ENCODE measurements at regions of chr9 and their contacts with region 1.

Region 1: GRCh38 chr9:71249729-71250317 is 128.4 kb upstream of the TRPM3 start:
- DNase-seq: peak; percentile 75
- H3K4me3 Mint-ChIP-seq: no peak overlapping the region
- H3K27ac Mint-ChIP-seq: no peak overlapping the region
- H3K4me1 Mint-ChIP-seq: peaks cover 5% of the 10 kb centered on the region
- H3K27me3 Mint-ChIP-seq: peaks cover 33% of the 10 kb centered on the region
- CTCF ChIP-seq: peak; percentile 87

Region 2: GRCh38 chr9:70634696-70635095 is 615.1 kb before region 1 on chr9:
- CTCF ChIA-PET with region 1: interaction called, 214 read pairs
- POLR2A ChIA-PET with region 1: no interaction called
- intact Hi-C with region 1: no loop called
- DNase-seq: no peak
- H3K4me3 Mint-ChIP-seq: no peak overlapping the region
- H3K27ac Mint-ChIP-seq: no peak overlapping the region
- H3K4me1 Mint-ChIP-seq: no peaks in the 10 kb centered on the region
- H3K27me3 Mint-ChIP-seq: peaks cover 11% of the 10 kb centered on the region
- CTCF ChIP-seq: no peak

Region 3: DNA sequence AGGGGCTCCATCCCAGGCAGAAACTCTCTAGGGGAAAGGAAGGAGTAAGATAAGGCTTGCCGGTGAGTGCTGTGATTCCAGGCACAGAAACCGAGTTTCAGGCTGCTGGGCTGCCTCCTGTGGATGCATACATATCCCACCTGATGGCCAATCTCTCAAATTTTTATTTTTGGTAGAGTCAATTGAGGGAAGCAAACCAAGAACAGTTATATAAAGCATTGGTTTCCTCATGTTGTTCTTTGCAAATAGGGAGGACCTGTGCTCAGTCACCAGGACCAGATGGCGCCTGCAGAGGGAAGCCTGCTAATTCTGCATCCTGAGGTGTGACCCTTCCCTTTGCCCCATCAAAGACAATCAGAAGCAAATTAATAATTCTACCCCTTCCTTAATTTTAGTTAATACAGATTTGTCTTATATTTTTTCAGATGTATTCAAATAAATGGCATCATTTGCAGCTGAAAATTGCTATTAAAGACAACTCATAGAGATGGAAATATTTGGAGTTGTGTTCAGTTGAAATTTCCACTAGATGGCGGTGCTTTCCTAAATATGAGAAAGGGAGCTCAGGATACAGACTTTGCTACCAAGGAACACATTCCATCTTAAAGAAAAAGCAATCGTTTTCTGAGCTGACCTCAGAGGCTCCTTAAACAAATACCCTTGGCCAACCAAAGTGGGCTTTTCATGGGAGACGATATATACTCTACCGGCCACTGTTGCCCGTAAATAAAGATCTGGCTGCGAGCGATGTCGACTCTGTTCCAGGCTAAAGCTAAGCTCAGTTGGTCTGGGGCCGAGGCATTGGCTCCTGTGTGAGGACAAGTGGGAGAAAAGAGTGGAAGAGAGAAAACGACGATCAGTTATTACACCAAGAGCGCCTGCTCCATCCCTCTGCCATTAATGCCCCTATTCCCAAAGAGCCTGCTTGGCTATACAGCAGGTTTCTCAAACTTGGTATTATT is 609.7 kb before region 1 on chr9:
- CTCF ChIA-PET with region 1: interaction called, 214 read pairs
- POLR2A ChIA-PET with region 1: interaction called, 4 read pairs
- intact Hi-C with region 1: loop called (anchors 1 kb)
- DNase-seq: peak; percentile 64
- H3K4me3 Mint-ChIP-seq: no peak overlapping the region
- H3K27ac Mint-ChIP-seq: no peak overlapping the region
- H3K4me1 Mint-ChIP-seq: no peaks in the 10 kb centered on the region
- H3K27me3 Mint-ChIP-seq: peaks cover 18% of the 10 kb centered on the region
- CTCF ChIP-seq: peak; percentile 66

Region 4: DNA sequence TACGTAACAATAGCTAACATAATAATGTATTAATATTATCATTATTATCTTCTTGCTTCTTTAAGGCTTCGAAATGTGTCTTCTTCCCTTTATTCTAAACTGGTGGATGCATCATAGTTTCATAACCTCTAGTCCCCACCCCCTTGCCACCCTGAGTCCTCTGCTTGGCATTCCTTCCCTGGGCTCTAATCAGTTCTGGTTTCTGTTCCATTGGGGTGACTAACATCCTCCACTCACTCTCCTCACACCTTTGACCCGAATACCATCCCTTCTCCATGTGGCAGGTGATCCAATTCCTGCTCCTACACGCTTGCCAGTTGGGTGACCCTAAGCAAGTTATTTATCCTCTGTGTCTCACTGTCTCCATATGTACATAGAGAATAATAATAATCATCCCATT is 414.5 kb before region 1 on chr9:
- CTCF ChIA-PET with region 1: no interaction called
- POLR2A ChIA-PET with region 1: no interaction called
- intact Hi-C with region 1: loop called (anchors 10 kb)
- DNase-seq: peak; percentile 8
- H3K4me3 Mint-ChIP-seq: no peak overlapping the region
- H3K27ac Mint-ChIP-seq: no peak overlapping the region
- H3K4me1 Mint-ChIP-seq: no peaks in the 10 kb centered on the region
- H3K27me3 Mint-ChIP-seq: peaks cover 5% of the 10 kb centered on the region
- CTCF ChIP-seq: no peak

Region 5: DNA sequence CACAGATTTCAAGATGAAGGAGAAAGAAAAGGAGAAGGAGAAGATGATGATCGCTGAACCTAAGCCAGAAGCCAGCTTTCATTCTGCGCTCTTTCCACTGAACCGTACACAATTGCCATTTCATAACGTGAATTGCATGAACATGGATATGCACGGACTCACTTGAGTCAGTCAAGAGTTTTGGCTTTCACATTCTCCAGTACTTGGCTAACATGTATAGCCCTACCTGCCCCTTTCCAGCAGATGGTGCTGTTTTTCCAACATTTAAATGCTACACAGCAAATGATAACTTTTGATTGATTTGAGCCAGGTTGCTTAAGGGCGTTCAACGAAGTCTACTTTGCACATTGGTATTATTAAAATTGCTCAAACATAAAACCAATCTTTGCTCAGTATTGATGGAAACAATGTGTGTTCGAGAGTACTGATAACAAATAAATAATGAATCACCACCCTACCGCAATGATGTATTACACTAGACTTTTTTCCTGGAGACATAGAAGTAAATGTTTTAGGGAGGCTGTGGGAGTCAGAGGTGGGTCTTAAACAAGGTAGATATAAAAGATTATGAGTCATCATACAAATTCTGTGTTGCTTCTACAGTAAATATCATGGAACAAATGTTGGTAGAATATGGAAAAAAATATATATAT is 324.8 kb before region 1 on chr9:
- CTCF ChIA-PET with region 1: interaction called, 26 read pairs
- POLR2A ChIA-PET with region 1: interaction called, 4 read pairs
- intact Hi-C with region 1: loop called (anchors 1 kb)
- DNase-seq: peak; percentile 88
- H3K4me3 Mint-ChIP-seq: peak overlapping the region; percentile 66
- H3K27ac Mint-ChIP-seq: peak overlapping the region; percentile 19
- H3K4me1 Mint-ChIP-seq: peaks cover 25% of the 10 kb centered on the region
- H3K27me3 Mint-ChIP-seq: no peaks in the 10 kb centered on the region
- CTCF ChIP-seq: peak; percentile 82

Region 6: GRCh38 chr9:71001780-71002386 is 247.9 kb before region 1 on chr9:
- CTCF ChIA-PET with region 1: interaction called, 6 read pairs
- POLR2A ChIA-PET with region 1: no interaction called
- intact Hi-C with region 1: loop called (anchors 1 kb)
- DNase-seq: peak; percentile 70
- H3K4me3 Mint-ChIP-seq: no peak overlapping the region
- H3K27ac Mint-ChIP-seq: no peak overlapping the region
- H3K4me1 Mint-ChIP-seq: no peaks in the 10 kb centered on the region
- H3K27me3 Mint-ChIP-seq: no peaks in the 10 kb centered on the region
- CTCF ChIP-seq: peak; percentile 47

Region 7: DNA sequence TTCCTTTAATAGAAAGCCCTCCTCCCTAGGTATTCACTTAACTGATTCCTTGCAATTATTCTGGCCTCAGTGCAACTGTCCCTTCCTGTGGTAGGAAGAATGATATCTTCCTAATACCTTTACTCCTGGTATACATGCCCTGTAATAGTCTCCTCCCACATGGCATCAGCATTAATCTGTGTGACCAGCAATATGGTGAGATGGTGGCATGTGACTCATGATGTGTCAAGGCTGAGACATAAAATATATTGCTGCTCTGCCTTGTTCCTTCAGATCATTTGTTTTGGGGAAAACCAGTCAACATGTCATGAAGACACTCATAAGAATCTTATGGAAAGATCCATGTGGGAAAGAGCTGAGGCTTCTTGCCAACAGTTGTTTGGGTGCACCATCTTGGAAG is 20.7 kb after region 1 on chr9:
- CTCF ChIA-PET with region 1: interaction called, 12 read pairs
- POLR2A ChIA-PET with region 1: no interaction called
- intact Hi-C with region 1: no loop called
- DNase-seq: no peak
- H3K4me3 Mint-ChIP-seq: no peak overlapping the region
- H3K27ac Mint-ChIP-seq: no peak overlapping the region
- H3K4me1 Mint-ChIP-seq: no peaks in the 10 kb centered on the region
- H3K27me3 Mint-ChIP-seq: peaks cover 31% of the 10 kb centered on the region
- CTCF ChIP-seq: no peak